ENCODE measurements at regions of chr15 and their contacts with region 1.

Region 1: DNA sequence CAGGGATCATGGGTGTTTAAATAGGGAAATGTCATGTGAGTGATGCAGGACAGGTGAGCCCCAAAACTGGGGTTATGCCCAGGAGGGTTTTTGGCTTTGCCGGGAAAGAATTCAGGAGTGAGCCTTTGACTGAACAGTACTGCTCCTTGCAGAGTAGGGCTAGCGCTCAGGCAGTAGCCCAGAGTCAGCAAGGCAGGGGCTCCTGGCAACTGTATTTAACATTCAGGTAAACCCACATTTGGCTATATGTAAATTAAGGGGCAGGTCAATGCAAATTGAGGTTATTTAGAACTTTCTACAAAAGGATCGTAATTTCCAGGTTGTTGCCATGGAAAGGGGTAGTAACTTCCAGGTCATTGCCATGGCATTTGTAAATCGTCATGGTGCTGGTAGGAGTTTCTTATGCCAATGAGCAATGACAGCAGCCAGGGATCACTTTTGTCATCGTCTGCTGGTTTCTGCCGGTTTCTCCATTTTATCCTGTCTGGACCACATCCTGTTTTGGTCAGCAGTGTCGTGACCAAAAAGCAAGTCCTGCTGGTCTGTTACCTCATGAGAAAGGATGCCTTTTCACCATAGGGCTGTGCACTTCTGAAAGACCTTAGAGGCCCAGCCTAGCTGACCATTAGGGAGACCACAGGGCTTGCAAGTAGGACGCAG is 24.3 kb downstream of the MTHFS start:
- DNase-seq: peak in 7 of 9 experiments; percentile 10 to 75 (median 32)
- ATAC-seq: peak; percentile 84
- H3K4me3 ChIP-seq: no peak overlapping the region
- H3K4me3 Mint-ChIP-seq: no peak overlapping the region
- H3K27ac ChIP-seq: no peak overlapping the region
- H3K27ac Mint-ChIP-seq: peak overlapping the region; percentile 78
- H3K4me1 ChIP-seq: peaks cover 11% of the 10 kb centered on the region
- H3K4me1 Mint-ChIP-seq: peaks cover 32% of the 10 kb centered on the region
- H3K27me3 ChIP-seq: no peaks in the 10 kb centered on the region
- H3K27me3 Mint-ChIP-seq: no peaks in the 10 kb centered on the region
- CTCF ChIP-seq: no peak

Region 2: GRCh38 chr15:79596051-79596507 is 276.4 kb before region 1 on chr15:
- CTCF ChIA-PET with region 1: no interaction called
- POLR2A ChIA-PET with region 1: no interaction called
- intact Hi-C with region 1: no loop called
- DNase-seq: peak in 3 of 9 experiments; percentile 30 to 71 (median 57)
- ATAC-seq: peak; percentile 58
- H3K4me3 ChIP-seq: no peak overlapping the region
- H3K4me3 Mint-ChIP-seq: no peak overlapping the region
- H3K27ac ChIP-seq: no peak overlapping the region
- H3K27ac Mint-ChIP-seq: no peak overlapping the region
- H3K4me1 ChIP-seq: no peaks in the 10 kb centered on the region
- H3K4me1 Mint-ChIP-seq: no peaks in the 10 kb centered on the region
- H3K27me3 ChIP-seq: no peaks in the 10 kb centered on the region
- H3K27me3 Mint-ChIP-seq: peaks cover 25% of the 10 kb centered on the region
- CTCF ChIP-seq: no peak

Region 3: DNA sequence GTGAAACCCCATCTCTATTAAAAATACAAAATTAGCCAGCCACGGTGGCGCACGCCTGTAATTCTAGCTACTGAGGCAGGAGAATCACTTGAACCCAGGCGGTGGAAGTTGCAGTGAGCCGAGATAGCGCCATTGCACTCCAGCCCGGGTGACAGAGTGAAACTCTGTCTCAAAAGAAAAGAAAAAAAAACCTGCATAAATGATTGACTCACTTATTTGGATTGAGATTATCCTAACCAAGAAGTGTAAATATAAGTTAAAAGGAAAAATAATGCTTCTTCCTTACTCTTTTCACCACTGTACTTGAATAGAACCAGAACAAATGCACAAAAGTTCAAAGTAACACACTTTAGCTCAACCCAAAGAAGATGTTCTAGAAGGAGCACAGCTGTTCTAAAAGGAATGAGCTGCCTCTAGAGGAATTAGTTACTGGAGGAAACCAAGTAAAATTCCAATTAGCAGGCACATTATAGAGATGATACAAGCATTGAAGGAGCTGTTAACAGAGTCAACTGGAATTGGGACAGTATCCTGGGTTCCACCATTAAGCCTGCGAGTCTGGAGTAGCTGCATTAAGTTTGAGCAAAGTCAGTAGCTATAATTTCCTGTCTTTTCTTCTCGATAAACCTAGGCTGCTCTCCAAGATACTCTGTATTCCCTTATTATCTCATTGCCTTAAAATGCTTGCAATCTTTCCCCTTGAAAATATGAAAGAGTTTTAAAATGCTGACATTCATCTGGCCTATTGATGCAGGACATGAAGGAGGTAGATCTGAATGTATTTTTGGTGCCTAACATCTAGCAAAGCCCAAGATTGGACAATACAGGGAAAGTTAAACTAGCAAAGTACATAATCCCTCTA is 14.8 kb after region 1 on chr15:
- CTCF ChIA-PET with region 1: no interaction called
- POLR2A ChIA-PET with region 1: interaction called, 11 read pairs
- intact Hi-C with region 1: no loop called
- DNase-seq: no peak
- ATAC-seq: no peak
- H3K4me3 ChIP-seq: no peak overlapping the region
- H3K4me3 Mint-ChIP-seq: no peak overlapping the region
- H3K27ac ChIP-seq: no peak overlapping the region
- H3K27ac Mint-ChIP-seq: no peak overlapping the region
- H3K4me1 ChIP-seq: peaks cover 3% of the 10 kb centered on the region
- H3K4me1 Mint-ChIP-seq: peaks cover 63% of the 10 kb centered on the region
- H3K27me3 ChIP-seq: no peaks in the 10 kb centered on the region
- H3K27me3 Mint-ChIP-seq: no peaks in the 10 kb centered on the region
- CTCF ChIP-seq: no peak

Measured in CD8-positive, alpha-beta T cell (primary cell).